MCF 10A (cell line): ENCODE measurements at regions of chr5 and their contacts with region 1.

Region 1: GRCh38 chr5:122845229-122846050 is at the start of gene SNX24:
- DNase-seq: peak; percentile 85
- H3K4me3 Mint-ChIP-seq: peak within 1 kb of the TSS; percentile 85
- H3K27ac Mint-ChIP-seq: peak within 1 kb of the TSS; percentile 91
- H3K4me1 Mint-ChIP-seq: peaks cover 40% of the 10 kb centered on the region
- H3K27me3 Mint-ChIP-seq: no peaks in the 10 kb centered on the region
- CTCF ChIP-seq: no peak
- total RNA-seq, gene SNX24: 97.0 and 98.1 TPM in 2 replicates

Region 2: GRCh38 chr5:122332589-122333555 is 512.6 kb before region 1 on chr5:
- CTCF ChIA-PET with region 1: no interaction called
- POLR2A ChIA-PET with region 1: no interaction called
- intact Hi-C with region 1: no loop called
- DNase-seq: no peak
- H3K4me3 Mint-ChIP-seq: no peak overlapping the region
- H3K27ac Mint-ChIP-seq: no peak overlapping the region
- H3K4me1 Mint-ChIP-seq: no peaks in the 10 kb centered on the region
- H3K27me3 Mint-ChIP-seq: no peaks in the 10 kb centered on the region
- CTCF ChIP-seq: no peak

Region 3: DNA sequence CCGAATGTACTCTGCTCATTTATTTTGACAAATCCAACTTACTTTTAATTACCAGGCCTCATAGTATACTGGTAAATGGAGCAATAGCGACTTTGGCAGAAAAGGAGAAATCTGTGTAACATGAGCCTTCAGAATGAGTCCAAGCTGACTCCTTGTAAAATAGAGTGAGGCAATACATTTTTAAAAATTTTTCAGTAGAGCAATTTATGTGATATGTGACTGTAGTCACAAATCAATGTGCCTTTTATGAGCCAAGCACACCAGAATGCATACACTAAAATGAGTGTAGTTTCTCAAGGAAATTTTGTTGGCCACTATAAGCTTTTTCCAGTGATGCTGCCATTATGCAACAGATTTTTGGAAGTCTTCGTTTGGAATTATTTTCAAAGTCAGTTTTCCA is 459.6 kb before region 1 on chr5:
- CTCF ChIA-PET with region 1: no interaction called
- POLR2A ChIA-PET with region 1: no interaction called
- intact Hi-C with region 1: no loop called
- DNase-seq: peak; percentile 39
- H3K4me3 Mint-ChIP-seq: no peak overlapping the region
- H3K27ac Mint-ChIP-seq: no peak overlapping the region
- H3K4me1 Mint-ChIP-seq: no peaks in the 10 kb centered on the region
- H3K27me3 Mint-ChIP-seq: no peaks in the 10 kb centered on the region
- CTCF ChIP-seq: no peak

Region 4: GRCh38 chr5:122421374-122422079 is 423.9 kb before region 1 on chr5:
- CTCF ChIA-PET with region 1: no interaction called
- POLR2A ChIA-PET with region 1: no interaction called
- intact Hi-C with region 1: no loop called
- DNase-seq: no peak
- H3K4me3 Mint-ChIP-seq: no peak overlapping the region
- H3K27ac Mint-ChIP-seq: no peak overlapping the region
- H3K4me1 Mint-ChIP-seq: no peaks in the 10 kb centered on the region
- H3K27me3 Mint-ChIP-seq: no peaks in the 10 kb centered on the region
- CTCF ChIP-seq: no peak

Region 5: GRCh38 chr5:122673343-122673742 is 172.1 kb before region 1 on chr5:
- CTCF ChIA-PET with region 1: no interaction called
- POLR2A ChIA-PET with region 1: no interaction called
- intact Hi-C with region 1: no loop called
- DNase-seq: no peak
- H3K4me3 Mint-ChIP-seq: no peak overlapping the region
- H3K27ac Mint-ChIP-seq: no peak overlapping the region
- H3K4me1 Mint-ChIP-seq: no peaks in the 10 kb centered on the region
- H3K27me3 Mint-ChIP-seq: no peaks in the 10 kb centered on the region
- CTCF ChIP-seq: no peak

Region 6: DNA sequence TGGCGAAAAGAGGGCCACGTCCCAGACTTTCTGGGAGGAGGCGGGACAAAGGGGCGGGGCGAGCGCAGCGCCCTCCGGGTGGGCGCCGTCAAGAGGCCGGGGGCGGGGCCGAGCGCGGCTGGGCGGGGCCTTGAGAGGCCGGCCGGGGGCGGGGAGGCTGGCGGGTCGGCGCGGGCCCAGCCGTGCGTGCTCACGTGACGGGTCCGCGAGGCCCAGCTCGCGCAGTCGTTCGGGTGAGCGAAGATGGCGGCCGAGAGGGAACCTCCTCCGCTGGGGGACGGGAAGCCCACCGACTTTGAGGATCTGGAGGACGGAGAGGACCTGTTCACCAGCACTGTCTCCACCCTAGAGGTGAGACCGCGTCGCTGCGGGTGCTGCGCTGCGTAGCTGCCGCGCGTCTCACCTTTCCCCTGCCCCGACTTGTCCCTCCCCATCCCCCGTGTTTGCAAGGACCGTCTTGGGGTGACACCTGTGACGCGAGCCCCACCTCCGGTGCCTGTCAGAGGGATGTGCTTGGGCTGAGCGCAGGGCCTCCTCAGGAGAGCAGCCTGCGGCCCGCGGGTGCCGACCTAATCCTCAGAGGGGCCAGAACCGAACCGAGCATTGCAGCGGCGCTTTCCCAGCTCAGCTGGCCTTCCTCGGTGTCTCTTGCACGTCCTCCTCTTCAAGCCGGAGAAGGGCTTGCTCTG is 70.4 kb before region 1 on chr5 and contains the start of gene SNX2:
- CTCF ChIA-PET with region 1: interaction called, 7 read pairs
- POLR2A ChIA-PET with region 1: interaction called, 41 read pairs
- intact Hi-C with region 1: loop called (anchors 2 kb)
- DNase-seq: peak; percentile 92
- H3K4me3 Mint-ChIP-seq: peak within 1 kb of the TSS; percentile 94
- H3K27ac Mint-ChIP-seq: peak within 1 kb of the TSS; percentile 95
- H3K4me1 Mint-ChIP-seq: peaks cover 30% of the 10 kb centered on the region
- H3K27me3 Mint-ChIP-seq: no peaks in the 10 kb centered on the region
- CTCF ChIP-seq: peak; percentile 32
- total RNA-seq, gene SNX2: 94.9 and 120 TPM in 2 replicates

Region 7: DNA sequence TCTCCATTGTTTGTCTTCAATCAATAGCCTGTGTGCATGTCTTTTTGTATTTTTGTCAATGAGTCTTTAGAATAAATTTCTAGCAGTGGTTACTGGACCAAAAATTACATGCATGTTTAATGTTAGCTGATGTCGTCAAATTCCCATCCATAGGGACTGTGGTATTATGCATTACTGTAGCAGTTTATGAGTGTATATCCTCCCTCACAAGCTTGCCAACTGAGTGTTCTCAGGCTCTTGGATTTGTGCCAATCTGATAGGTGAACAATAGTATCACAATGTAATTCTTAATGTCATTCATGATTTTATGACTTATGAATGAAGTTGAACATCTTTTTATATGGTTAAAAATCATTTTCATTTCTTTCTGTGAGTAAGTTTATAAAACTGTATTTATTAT is 13.0 kb after region 1 on chr5:
- CTCF ChIA-PET with region 1: interaction called, 7 read pairs
- POLR2A ChIA-PET with region 1: interaction called, 67 read pairs
- intact Hi-C with region 1: no loop called
- DNase-seq: peak; percentile 78
- H3K4me3 Mint-ChIP-seq: no peak overlapping the region
- H3K27ac Mint-ChIP-seq: no peak overlapping the region
- H3K4me1 Mint-ChIP-seq: peaks cover 22% of the 10 kb centered on the region
- H3K27me3 Mint-ChIP-seq: no peaks in the 10 kb centered on the region
- CTCF ChIP-seq: no peak

Region 8: GRCh38 chr5:122999945-123000563 is 154.6 kb after region 1 on chr5:
- CTCF ChIA-PET with region 1: no interaction called
- POLR2A ChIA-PET with region 1: no interaction called
- intact Hi-C with region 1: loop called (anchors 5 kb)
- DNase-seq: peak; percentile 75
- H3K4me3 Mint-ChIP-seq: no peak overlapping the region
- H3K27ac Mint-ChIP-seq: no peak overlapping the region
- H3K4me1 Mint-ChIP-seq: no peaks in the 10 kb centered on the region
- H3K27me3 Mint-ChIP-seq: no peaks in the 10 kb centered on the region
- CTCF ChIP-seq: peak; percentile 74